ENCODE measurements at regions of chrX and their contacts with region 1.

Region 1: GRCh38 chrX:41084044-41084892 is 977 bp upstream of the USP9X start:
- DNase-seq: peak; percentile 93
- ATAC-seq: peak; percentile 69
- H3K4me3 Mint-ChIP-seq: peak overlapping the region; percentile 88
- H3K27ac Mint-ChIP-seq: peak overlapping the region; percentile 99
- H3K4me1 Mint-ChIP-seq: peaks cover 11% of the 10 kb centered on the region
- H3K27me3 Mint-ChIP-seq: no peaks in the 10 kb centered on the region

Region 2: GRCh38 chrX:40735325-40736169 is 348.7 kb before region 1 on chrX and contains the start of gene MED14:
- POLR2A ChIA-PET with region 1: interaction called, 14 read pairs
- DNase-seq: peak; percentile 87
- ATAC-seq: peak; percentile 93
- H3K4me3 Mint-ChIP-seq: peak within 1 kb of the TSS; percentile 94
- H3K27ac Mint-ChIP-seq: peak within 1 kb of the TSS; percentile 97
- H3K4me1 Mint-ChIP-seq: peaks cover 20% of the 10 kb centered on the region
- H3K27me3 Mint-ChIP-seq: no peaks in the 10 kb centered on the region
- total RNA-seq, gene MED14: 40.3 to 51.4 TPM

Region 3: DNA sequence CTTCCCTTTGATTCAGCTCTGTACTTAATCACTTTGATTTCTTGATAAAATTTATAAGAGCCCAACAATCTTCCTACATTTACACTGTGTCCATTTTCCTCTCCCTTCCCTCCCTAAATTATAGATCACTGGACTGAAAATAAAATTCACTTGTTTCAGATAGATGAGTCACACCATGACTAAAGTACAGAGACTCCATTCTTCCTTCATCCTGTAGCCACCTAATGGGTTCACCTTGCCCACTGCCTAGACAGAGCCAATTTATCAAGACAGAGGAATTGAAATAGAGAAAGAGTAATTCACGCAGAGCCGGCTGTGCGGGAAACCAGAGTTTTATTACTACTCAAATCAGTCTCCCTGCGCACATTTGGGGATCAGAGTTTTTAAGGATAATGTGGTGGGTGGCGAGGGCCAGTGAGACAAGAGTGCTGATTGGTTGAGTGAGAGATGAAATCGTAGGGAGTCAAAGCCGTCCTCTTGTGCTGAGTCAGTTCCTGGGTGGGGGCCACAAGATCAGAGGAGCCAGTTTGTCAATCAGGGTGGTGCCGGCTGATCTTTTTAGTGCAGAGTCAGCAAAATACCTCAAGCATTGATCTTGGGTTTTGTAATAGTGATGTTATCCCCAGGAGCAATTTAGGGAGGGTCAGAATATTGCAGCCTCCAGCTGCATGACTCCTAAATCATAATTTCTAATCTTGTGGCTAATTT is 277.6 kb before region 1 on chrX:
- POLR2A ChIA-PET with region 1: no interaction called
- DNase-seq: no peak
- ATAC-seq: no peak
- H3K4me3 Mint-ChIP-seq: no peak overlapping the region
- H3K27ac Mint-ChIP-seq: no peak overlapping the region
- H3K4me1 Mint-ChIP-seq: no peaks in the 10 kb centered on the region
- H3K27me3 Mint-ChIP-seq: no peaks in the 10 kb centered on the region

Region 4: DNA sequence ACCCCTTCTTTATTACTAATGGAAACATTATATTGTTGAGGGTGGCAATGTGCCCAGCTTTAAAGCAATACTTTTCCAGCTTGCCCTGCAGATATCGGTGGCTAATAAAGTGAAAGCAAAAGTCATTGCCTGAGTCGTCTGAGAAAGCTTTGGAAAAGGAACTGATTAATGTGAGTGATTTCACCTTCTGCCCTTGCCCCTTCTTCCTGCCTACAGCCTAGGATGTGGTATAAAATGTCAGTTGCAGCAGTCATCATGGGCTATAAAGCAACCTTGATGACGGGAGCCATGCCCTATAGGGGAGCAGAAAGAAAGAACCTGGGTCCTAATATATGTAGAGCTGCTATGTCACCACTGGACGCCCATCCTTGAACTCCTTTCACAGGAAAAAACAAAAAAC is 131.4 kb before region 1 on chrX:
- POLR2A ChIA-PET with region 1: interaction called, 10 read pairs
- DNase-seq: no peak
- ATAC-seq: peak; percentile 95
- H3K4me3 Mint-ChIP-seq: peak overlapping the region; percentile 80
- H3K27ac Mint-ChIP-seq: peak overlapping the region; percentile 89
- H3K4me1 Mint-ChIP-seq: peaks cover 9% of the 10 kb centered on the region
- H3K27me3 Mint-ChIP-seq: no peaks in the 10 kb centered on the region

Region 5: DNA sequence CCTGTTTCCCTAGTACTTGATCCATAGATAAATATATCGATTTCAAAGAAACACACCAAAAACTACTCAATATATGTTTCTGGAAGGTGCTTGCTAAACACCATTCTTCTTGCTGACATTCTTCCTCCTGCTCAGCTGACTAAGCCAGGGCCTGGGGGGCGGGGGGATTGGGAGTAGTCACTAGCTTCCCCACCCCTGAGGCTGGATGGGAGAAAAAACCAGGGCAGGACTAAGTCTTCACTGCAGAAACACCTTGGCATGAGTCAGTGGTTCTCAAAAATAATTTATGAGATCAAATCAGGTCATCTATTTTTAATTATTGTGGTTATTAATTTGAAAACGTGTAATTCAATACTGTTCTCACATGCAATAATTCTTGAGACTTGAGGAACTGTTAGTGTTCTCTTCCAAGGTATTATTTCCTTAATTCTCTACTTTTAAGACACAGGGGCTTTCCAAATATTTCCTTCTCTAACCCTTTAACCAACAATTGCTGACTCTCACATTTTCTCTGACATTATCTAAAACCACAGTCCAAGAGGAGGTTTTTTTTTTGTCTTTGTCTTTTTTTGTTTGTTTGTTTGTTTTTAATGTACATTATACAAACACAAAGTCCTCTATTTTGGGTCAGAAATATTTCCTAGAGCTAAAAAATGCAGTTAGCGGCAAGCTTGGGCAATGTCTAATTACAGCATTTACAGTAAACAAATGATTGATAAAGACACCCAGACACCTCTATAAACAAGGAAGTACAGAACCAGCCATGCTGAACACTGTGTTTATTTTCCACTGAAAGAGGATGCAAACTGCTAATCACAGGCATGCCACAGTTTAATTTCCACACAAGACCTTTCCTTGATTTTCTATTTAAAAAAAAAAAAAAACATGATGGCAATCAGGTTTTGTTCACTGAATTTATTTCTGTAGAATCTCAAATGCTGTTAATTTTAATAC is 119.4 kb before region 1 on chrX:
- POLR2A ChIA-PET with region 1: no interaction called
- DNase-seq: no peak
- ATAC-seq: no peak
- H3K4me3 Mint-ChIP-seq: no peak overlapping the region
- H3K27ac Mint-ChIP-seq: no peak overlapping the region
- H3K4me1 Mint-ChIP-seq: no peaks in the 10 kb centered on the region
- H3K27me3 Mint-ChIP-seq: no peaks in the 10 kb centered on the region

Region 6: DNA sequence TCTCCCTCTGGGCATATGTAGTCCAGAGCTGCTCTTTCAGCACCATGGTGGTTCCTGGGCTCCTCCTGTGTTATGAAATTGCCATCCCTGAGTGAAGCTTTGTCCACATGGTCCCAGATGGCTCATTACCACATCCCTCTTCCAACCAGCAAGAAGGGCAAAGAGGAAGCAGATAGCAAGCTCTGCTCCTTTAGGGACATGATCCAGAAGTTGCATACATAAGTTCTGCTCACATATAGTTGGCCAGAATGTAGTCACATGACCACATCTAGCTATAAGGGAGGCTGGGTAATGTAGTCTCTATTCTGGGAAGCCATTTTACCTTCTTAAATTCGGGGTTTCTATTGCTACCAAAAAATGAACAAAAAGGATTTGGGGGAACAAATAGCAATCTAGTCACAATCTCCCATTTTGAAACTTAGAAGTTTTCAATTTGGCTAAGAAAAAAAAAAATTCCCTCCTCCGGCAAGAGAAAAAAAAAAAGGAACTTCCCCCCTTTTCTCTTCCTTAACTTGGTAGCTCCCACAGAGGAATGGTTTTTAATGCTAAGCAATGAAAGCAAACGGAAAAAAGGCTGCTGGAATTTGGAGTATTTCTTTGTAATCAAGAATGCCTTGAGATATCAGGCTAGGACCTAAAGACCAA is 87.3 kb before region 1 on chrX:
- POLR2A ChIA-PET with region 1: no interaction called
- DNase-seq: no peak
- ATAC-seq: no peak
- H3K4me3 Mint-ChIP-seq: no peak overlapping the region
- H3K27ac Mint-ChIP-seq: no peak overlapping the region
- H3K4me1 Mint-ChIP-seq: peaks cover 3% of the 10 kb centered on the region
- H3K27me3 Mint-ChIP-seq: no peaks in the 10 kb centered on the region

Region 7: GRCh38 chrX:41010188-41010846 is 74.0 kb before region 1 on chrX:
- POLR2A ChIA-PET with region 1: interaction called, 38 read pairs
- DNase-seq: peak; percentile 56
- ATAC-seq: peak; percentile 93
- H3K4me3 Mint-ChIP-seq: peak overlapping the region; percentile 77
- H3K27ac Mint-ChIP-seq: peak overlapping the region; percentile 82
- H3K4me1 Mint-ChIP-seq: peaks cover 13% of the 10 kb centered on the region
- H3K27me3 Mint-ChIP-seq: no peaks in the 10 kb centered on the region

Region 8: DNA sequence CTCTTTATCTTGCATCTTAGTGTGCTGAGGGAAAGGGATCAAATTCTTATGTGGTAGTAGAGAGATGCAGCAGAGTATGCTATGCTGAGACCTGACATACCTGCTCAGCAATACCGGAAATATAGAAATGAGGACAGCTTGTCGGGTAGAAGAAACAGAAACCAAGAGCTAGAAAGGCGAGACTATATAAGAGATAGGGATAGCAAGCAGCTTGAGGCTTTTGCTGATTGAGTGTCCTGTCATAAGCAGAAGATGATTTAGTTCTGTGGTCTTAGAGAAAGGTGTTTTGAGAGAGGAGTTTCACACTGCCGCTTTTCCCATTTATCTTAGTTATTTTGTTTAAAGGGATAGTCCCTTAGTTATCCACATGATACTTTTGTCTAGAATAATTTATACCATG is 32.7 kb after region 1 on chrX:
- POLR2A ChIA-PET with region 1: interaction called, 35 read pairs
- DNase-seq: no peak
- ATAC-seq: peak; percentile 87
- H3K4me3 Mint-ChIP-seq: peak overlapping the region; percentile 76
- H3K27ac Mint-ChIP-seq: peak overlapping the region; percentile 89
- H3K4me1 Mint-ChIP-seq: peaks cover 47% of the 10 kb centered on the region
- H3K27me3 Mint-ChIP-seq: no peaks in the 10 kb centered on the region